Activated B cell treated with CpG ODN at 0.5 μM for 24 hours (primary cell): ENCODE measurements at regions of chr9 and their contacts with region 1.

Region 1: GRCh38 chr9:33403941-33404787 is 1.8 kb upstream of the AQP7 start:
- DNase-seq: no peak
- ATAC-seq: no peak
- H3K4me3 Mint-ChIP-seq: no peak overlapping the region
- H3K27ac Mint-ChIP-seq: no peak overlapping the region
- H3K4me1 Mint-ChIP-seq: no peaks in the 10 kb centered on the region
- H3K27me3 Mint-ChIP-seq: peaks cover 5% of the 10 kb centered on the region
- CTCF ChIP-seq: no peak

Region 2: DNA sequence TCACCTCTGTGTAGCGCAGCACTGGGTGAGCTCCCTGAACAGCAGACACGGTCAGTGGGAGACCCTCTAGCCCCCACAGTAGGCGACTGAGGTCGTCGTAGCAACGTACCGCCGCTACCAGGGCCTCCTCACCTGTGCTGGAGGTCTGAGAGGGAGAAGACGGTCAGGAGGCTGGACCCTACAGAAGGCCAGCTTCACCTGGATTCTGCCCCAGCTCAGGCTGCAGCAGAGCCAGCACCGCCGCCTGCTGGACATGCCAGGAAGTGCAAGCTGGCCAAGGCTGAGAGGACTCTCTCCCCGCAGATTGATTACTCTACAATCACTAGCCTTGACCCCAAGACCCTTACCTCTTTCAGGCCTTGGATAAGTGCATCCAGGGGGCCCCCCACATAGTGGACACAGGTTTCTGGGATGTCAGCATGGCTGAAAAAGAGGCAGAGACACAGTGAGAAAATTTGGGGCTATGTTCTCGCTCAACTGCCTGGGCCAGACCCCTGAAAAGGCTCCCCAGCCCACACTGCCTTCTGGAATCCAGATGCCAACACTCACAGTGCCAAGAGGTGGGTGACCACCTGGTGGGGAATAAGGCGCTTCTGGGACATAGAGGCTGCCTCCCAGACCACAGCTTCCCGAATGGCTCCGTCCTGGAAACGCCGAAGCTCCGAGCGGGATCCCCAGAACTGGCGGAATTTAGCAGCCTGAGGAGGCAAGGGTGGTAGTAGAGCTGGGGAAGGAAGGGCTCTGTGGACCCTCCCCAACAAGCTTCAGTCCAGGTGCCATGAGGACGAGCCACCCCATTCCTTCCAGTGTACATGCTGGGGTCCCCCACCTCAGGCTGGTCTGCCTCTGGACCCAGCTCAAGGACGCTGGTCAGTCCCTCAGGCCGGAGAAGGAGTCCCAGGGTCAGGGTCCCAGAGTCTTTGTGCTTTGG is 62.7 kb after region 1 on chr9:
- CTCF ChIA-PET with region 1: interaction called, 10 read pairs
- POLR2A ChIA-PET with region 1: no interaction called
- intact Hi-C with region 1: loop called (anchors 1 kb)
- DNase-seq: peak; percentile 61
- ATAC-seq: peak; percentile 83
- H3K4me3 Mint-ChIP-seq: no peak overlapping the region
- H3K27ac Mint-ChIP-seq: no peak overlapping the region
- H3K4me1 Mint-ChIP-seq: peaks cover 6% of the 10 kb centered on the region
- H3K27me3 Mint-ChIP-seq: no peaks in the 10 kb centered on the region
- CTCF ChIP-seq: peak; percentile 48

Region 3: GRCh38 chr9:33498387-33498786 is 94.2 kb after region 1 on chr9:
- CTCF ChIA-PET with region 1: no interaction called
- POLR2A ChIA-PET with region 1: no interaction called
- intact Hi-C with region 1: loop called (anchors 1 kb)
- DNase-seq: no peak
- ATAC-seq: no peak
- H3K4me3 Mint-ChIP-seq: no peak overlapping the region
- H3K27ac Mint-ChIP-seq: no peak overlapping the region
- H3K4me1 Mint-ChIP-seq: no peaks in the 10 kb centered on the region
- H3K27me3 Mint-ChIP-seq: peaks cover 3% of the 10 kb centered on the region
- CTCF ChIP-seq: no peak

Region 4: GRCh38 chr9:33517373-33517772 is 113.2 kb after region 1 on chr9:
- CTCF ChIA-PET with region 1: interaction called, 3 read pairs
- POLR2A ChIA-PET with region 1: no interaction called
- intact Hi-C with region 1: loop called (anchors 1 kb)
- DNase-seq: no peak
- ATAC-seq: no peak
- H3K4me3 Mint-ChIP-seq: no peak overlapping the region
- H3K27ac Mint-ChIP-seq: no peak overlapping the region
- H3K4me1 Mint-ChIP-seq: no peaks in the 10 kb centered on the region
- H3K27me3 Mint-ChIP-seq: peaks cover 13% of the 10 kb centered on the region
- CTCF ChIP-seq: no peak